Body of pancreas (tissue), 4 donors: ENCODE measurements at regions of chr13 and their contacts with region 1.

Region 1: DNA sequence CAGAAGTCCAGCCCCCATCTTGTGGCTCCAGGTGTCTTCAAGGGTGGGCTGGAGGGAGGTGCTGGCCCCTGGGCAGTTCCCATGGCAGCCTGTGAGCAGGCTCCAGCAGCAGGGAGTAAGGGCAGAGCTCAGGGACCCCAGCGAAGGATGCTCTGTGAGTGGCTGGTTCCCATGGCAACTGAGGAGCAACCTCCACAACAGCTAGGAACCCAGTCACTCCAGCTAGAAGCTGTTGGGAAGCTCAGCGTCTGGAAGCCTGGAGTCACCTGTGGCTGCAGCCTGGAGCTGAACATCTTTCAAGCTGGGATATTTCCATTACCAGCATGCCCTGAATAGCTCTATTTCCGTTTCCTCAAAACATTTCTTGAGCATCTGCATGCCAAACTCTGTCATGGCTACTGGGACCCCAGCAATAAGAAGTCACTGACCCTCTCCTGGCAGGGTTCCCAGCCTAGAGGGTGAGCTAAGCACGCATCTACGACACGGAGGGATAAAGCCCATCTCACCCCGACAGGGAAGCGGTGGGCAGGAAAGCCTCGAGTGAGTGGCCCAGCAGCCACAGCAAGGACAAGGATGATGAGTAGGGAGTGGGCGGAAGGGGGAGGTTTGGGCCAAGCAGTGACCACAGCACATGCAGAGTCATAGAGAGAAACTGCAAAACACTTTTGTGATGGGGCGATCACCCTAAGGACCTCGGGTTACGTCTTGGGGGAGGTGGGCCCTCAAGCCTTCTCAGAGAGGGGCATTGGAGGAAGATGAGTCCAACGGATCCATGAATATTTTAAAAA is 52.6 kb downstream of the ALOX5AP start:
- DNase-seq: no peak
- ATAC-seq: no peak
- H3K4me3 ChIP-seq: no peak overlapping the region
- H3K27ac ChIP-seq: no peak overlapping the region
- H3K4me1 ChIP-seq: no peaks in the 10 kb centered on the region
- H3K27me3 ChIP-seq: no peaks in the 10 kb centered on the region
- CTCF ChIP-seq: no peak
- POLR2A ChIP-seq: no peak

Region 2: GRCh38 chr13:30132623-30133553 is 655.0 kb before region 1 on chr13:
- intact Hi-C with region 1: loop called (anchors 10 kb)
- DNase-seq: peak; percentile 95 to 98 (median 96)
- ATAC-seq: peak; percentile 97
- H3K4me3 ChIP-seq: no peak overlapping the region
- H3K27ac ChIP-seq: no peak overlapping the region
- H3K4me1 ChIP-seq: peaks cover 6% of the 10 kb centered on the region
- H3K27me3 ChIP-seq: no peaks in the 10 kb centered on the region
- CTCF ChIP-seq: peak; percentile 76 to 92 (median 87)
- POLR2A ChIP-seq: no peak

Region 3: GRCh38 chr13:30847650-30848307 is 59.8 kb after region 1 on chr13:
- intact Hi-C with region 1: loop called (anchors 10 kb)
- DNase-seq: peak in 1 of 4 donors; percentile 38
- ATAC-seq: peak; percentile 69
- H3K4me3 ChIP-seq: no peak overlapping the region
- H3K27ac ChIP-seq: peak overlapping the region in 1 of 4 donors; percentile 28
- H3K4me1 ChIP-seq: no peaks in the 10 kb centered on the region
- H3K27me3 ChIP-seq: no peaks in the 10 kb centered on the region
- CTCF ChIP-seq: no peak
- POLR2A ChIP-seq: no peak